H1 (cell line): ENCODE measurements at regions of chr10 and their contacts with region 1.

Region 1: DNA sequence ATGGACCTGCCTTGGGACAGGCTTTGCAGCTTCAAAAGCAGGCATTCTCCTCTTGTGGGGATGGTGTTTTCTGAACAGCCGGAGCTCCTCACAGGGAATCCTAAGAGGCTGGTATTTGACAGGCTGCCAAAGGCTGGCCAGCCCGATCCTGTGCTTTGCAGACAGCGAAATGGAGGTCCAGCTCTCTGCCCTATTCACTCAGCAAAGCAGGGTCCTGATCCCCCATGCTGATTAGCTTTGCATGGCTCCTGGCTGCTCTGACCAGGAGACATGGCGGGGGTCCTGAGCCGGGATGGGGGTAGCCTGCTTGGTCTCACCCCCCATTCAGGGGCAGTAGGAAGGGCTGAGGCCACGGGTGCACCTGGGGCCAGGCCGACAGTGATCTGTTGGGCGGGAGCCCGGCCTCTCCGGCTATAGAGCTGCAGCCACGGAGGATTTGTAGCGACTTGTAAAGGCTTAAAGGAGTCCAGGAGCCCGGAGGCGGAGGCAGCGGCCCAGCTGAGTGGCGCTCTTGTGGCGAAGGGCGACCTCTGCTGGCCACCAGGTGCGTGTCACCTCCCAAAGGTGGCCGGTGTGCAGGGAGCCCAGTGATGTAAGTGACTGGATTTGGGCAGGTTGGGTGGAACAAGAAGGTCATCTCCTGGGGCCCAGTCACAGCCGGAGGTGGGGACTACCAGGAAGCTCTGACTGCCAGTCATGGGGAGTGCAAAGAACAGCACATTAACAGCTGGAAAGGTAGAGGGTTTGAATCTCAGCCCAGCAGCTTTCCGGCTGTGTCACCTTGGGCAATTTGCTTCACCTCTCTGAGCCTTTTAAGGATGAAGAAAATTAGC is 126.5 kb downstream of the ZMIZ1 start:
- DNase-seq: peak; percentile 79 to 89
- H3K4me3 ChIP-seq: no peak overlapping the region
- H3K27ac ChIP-seq: no peak overlapping the region; the same call in 1 of the 2 replicates
- H3K4me1 ChIP-seq: peaks cover 0 to 14% (median 5%) of the 10 kb centered on the region in 4 experiments; a peak in 5 of 7 replicates
- H3K27me3 ChIP-seq: no peaks in the 10 kb centered on the region
- CTCF ChIP-seq: peak; percentile 92 to 98 (median 95)
- EP300 ChIP-seq: no peak
- POLR2A ChIP-seq: no peak
- RAD21 ChIP-seq: peak; percentile 98

Region 2: GRCh38 chr10:78972947-78973900 is 222.1 kb before region 1 on chr10:
- CTCF ChIA-PET with region 1: interaction called, 11 read pairs
- POLR2A ChIA-PET with region 1: no interaction called
- DNase-seq: peak; percentile 50 to 72
- H3K4me3 ChIP-seq: peak overlapping the region; percentile 28 to 66 (median 40); a peak in 7 of 8 replicates
- H3K27ac ChIP-seq: no peak overlapping the region
- H3K4me1 ChIP-seq: peaks cover 3 to 27% (median 19%) of the 10 kb centered on the region in 4 experiments
- H3K27me3 ChIP-seq: peaks cover 0 to 6% (median 0%) of the 10 kb centered on the region in 4 experiments; a peak in 3 of 7 replicates
- CTCF ChIP-seq: no peak
- EP300 ChIP-seq: no peak
- POLR2A ChIP-seq: no peak; a peak in 1 of 3 replicates
- RAD21 ChIP-seq: no peak

Region 3: DNA sequence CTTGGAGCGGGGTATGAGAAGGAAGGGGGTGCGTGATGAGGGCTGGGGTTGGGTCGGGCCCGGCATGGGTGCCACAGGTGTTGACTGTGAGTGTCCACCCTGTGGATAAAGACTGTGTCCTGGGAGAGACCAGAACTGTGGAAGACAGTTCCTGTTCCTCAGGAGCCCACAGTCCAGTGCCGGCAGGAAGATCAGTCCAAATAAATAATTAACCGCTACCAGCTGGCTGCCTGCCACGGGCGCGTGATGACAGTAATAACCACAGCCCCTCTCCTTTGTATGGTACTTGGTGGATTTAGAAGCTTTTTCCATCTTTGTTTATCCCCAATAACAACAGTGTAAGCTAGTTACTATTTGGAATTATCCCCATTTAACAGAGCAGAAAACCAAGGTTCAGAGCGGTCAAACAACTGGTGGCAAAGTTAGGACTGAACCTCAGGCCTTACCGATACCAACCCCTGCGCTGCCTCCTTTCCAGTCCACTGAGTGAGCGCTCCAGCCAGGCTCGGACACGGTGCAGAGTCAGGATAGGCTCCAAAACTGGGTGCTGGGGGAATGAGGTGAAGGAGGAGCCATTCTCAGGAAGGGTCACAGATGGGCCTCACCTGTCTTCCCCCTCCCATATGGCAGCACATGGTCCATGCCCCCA is 121.4 kb before region 1 on chr10:
- CTCF ChIA-PET with region 1: interaction called, 34 read pairs
- POLR2A ChIA-PET with region 1: interaction called, 4 read pairs
- DNase-seq: no peak
- H3K4me3 ChIP-seq: no peak overlapping the region
- H3K27ac ChIP-seq: no peak overlapping the region
- H3K4me1 ChIP-seq: peaks cover 10 to 40% (median 25%) of the 10 kb centered on the region in 4 experiments
- H3K27me3 ChIP-seq: no peaks in the 10 kb centered on the region; a peak in 1 of 7 replicates
- CTCF ChIP-seq: no peak
- EP300 ChIP-seq: no peak
- POLR2A ChIP-seq: no peak
- RAD21 ChIP-seq: no peak

Region 4: DNA sequence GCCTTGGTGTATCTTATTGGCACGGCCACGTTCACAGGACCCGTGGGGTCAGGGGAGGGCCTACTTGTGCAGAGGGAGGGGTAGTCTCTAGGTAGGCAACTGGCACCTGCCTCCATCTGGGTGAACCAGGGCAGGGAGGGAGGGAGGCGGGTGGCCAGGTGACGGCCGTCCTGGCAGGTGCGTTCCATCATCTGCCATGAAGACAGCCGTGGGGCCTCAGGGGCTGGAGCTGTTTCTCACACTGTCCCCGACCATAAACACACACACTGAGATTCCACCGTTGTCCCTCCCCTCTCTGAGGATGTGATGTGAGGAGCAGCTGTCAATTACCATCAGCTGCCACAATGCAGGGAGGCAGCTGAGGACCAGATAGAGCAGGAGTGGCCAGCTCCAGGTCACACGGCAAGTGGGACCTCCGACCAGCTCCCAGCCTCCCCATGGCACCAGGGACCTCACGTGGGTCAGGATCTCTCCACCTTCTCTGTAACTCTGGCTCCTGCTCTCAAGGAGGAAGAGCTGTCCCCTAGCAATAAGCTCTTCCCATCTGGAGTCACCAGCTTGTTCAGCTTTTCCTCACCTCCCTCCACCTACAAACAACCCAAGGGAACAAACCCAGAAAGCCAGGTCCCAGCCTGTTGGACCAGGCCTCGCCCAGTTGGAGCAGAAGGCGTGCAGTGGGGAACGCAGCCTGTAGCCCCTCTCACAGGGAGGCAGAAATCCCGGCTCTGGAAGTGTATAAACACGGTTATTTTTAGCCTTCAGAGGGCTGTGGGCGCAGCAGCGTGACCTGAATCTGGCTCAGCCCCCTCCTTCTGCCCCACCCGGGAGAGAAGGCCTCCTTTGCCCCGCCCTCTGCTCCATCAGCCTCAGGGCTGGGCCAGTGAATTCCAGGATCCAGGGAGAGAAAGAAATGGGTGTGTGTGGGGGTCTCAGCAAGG is 93.5 kb before region 1 on chr10:
- CTCF ChIA-PET with region 1: interaction called, 16 read pairs
- POLR2A ChIA-PET with region 1: no interaction called
- DNase-seq: no peak
- H3K4me3 ChIP-seq: no peak overlapping the region
- H3K27ac ChIP-seq: no peak overlapping the region
- H3K4me1 ChIP-seq: peaks cover 10 to 41% (median 21%) of the 10 kb centered on the region in 4 experiments
- H3K27me3 ChIP-seq: no peaks in the 10 kb centered on the region
- CTCF ChIP-seq: no peak
- EP300 ChIP-seq: no peak
- POLR2A ChIP-seq: no peak
- RAD21 ChIP-seq: no peak

Region 5: DNA sequence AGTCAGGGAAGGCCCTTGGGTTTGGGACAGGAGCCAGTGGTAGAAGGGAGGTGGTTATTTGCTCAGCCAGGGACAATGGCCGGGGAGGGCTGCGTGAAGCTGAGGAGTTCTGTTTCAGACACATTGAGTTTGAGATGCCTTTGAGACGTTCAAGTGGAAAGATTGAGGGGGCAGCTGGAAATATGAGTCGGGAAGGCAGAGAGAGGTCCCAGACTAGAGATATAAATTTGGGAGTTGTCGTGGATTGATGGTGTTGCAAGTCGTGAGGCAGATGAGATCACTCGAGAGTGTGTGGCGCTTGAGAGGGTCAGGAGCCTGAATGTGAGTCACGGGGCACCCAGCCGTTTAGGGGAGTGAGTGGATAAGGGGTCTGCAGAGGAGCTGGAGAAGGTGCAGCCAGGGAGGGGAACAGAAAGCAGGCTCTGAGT is 53.2 kb before region 1 on chr10:
- CTCF ChIA-PET with region 1: interaction called, 13 read pairs
- POLR2A ChIA-PET with region 1: no interaction called
- DNase-seq: no peak
- H3K4me3 ChIP-seq: no peak overlapping the region
- H3K27ac ChIP-seq: no peak overlapping the region
- H3K4me1 ChIP-seq: peaks cover 0 to 39% (median 19%) of the 10 kb centered on the region in 4 experiments; a peak in 6 of 7 replicates
- H3K27me3 ChIP-seq: no peaks in the 10 kb centered on the region
- CTCF ChIP-seq: no peak
- EP300 ChIP-seq: no peak
- POLR2A ChIP-seq: no peak
- RAD21 ChIP-seq: no peak

Region 6: DNA sequence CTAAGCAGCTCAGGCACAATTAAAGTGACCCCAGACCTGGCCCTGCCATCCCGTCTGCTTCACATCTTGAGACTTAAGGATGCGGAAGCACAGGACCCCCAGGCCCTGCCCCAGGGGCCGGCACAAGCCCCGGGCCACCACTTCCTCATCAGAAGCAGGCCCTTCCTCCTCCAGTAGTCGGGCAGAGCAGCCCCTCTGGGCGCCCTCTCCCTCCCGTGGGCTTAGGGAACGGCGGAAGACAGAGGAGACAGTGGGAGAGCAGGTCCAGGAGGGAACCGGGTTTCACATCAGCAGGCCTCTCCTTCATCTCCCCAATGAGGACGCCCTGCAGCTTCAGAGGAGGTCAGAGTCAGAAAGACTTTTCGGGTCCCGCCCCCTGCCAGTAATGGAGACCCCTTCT is 16.3 kb after region 1 on chr10:
- CTCF ChIA-PET with region 1: interaction called, 37 read pairs
- POLR2A ChIA-PET with region 1: no interaction called
- DNase-seq: no peak
- H3K4me3 ChIP-seq: no peak overlapping the region
- H3K27ac ChIP-seq: no peak overlapping the region
- H3K4me1 ChIP-seq: no peaks in the 10 kb centered on the region
- H3K27me3 ChIP-seq: no peaks in the 10 kb centered on the region
- CTCF ChIP-seq: no peak
- EP300 ChIP-seq: no peak
- POLR2A ChIP-seq: no peak
- RAD21 ChIP-seq: no peak

Region 7: DNA sequence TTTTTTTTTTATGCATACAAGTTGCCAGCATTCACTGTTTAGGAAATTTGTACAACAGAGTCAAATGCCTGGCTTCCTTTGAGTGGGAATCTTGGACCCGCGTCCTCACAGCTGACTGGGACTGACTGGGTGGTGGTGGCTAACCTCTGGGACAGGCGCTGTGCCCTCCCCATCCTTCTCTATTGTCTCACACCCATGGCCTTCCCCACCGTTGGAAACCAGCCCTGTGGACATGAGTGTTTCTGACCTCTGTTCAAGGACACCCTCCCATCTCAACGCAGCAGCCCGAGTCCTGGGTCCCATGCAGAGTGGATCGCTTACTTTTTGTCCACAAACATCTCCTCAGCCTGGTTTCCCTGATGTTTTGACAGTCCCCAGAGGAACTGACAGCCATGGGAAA is 26.9 kb after region 1 on chr10:
- CTCF ChIA-PET with region 1: no interaction called
- POLR2A ChIA-PET with region 1: no interaction called
- DNase-seq: no peak
- H3K4me3 ChIP-seq: no peak overlapping the region
- H3K27ac ChIP-seq: no peak overlapping the region
- H3K4me1 ChIP-seq: peaks cover 4 to 39% (median 34%) of the 10 kb centered on the region in 4 experiments
- H3K27me3 ChIP-seq: no peaks in the 10 kb centered on the region; a peak in 1 of 7 replicates
- CTCF ChIP-seq: no peak
- EP300 ChIP-seq: no peak
- POLR2A ChIP-seq: no peak
- RAD21 ChIP-seq: no peak